ENCODE measurements at regions of chr22 and their contacts with region 1.

Region 1: DNA sequence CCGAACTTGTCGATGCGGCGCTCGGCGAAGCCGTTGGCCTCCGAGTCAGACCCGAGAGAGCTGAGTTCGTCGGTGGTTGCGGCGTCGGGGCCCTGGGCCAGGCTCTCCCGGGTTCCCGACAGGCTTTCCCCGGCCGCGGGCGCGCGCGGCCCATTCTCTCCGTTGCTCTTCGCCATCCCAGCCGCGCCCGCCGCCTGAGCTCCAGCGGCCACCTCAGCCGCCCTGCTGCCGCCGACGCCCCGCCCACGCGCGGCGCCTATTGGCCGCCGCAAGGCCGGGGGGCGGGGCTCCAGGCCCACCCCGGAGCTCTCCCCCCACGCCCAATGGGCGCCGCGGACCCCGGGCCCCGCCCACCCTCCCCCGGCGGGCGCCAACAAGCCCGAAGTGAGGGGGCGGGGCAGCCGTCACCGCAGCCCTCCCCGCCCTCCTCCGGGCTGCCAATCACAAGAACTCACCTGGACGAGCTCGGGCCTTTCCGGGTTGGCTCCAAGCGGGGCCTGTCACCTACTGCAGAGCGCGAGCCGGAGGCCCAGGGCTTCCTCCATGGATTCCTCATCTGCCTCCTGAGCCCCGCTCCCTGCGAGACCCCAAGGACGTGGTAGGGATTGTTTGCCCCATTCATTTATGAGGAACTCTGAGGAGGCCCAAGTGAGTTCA is at the start of gene TBC1D10A:
- H3K4me3 ChIP-seq: peak within 1 kb of the TSS; percentile 85
- H3K27ac ChIP-seq: peak within 1 kb of the TSS; percentile 72
- H3K4me1 ChIP-seq: peaks cover 11% of the 10 kb centered on the region
- CTCF ChIP-seq: no peak

Region 2: DNA sequence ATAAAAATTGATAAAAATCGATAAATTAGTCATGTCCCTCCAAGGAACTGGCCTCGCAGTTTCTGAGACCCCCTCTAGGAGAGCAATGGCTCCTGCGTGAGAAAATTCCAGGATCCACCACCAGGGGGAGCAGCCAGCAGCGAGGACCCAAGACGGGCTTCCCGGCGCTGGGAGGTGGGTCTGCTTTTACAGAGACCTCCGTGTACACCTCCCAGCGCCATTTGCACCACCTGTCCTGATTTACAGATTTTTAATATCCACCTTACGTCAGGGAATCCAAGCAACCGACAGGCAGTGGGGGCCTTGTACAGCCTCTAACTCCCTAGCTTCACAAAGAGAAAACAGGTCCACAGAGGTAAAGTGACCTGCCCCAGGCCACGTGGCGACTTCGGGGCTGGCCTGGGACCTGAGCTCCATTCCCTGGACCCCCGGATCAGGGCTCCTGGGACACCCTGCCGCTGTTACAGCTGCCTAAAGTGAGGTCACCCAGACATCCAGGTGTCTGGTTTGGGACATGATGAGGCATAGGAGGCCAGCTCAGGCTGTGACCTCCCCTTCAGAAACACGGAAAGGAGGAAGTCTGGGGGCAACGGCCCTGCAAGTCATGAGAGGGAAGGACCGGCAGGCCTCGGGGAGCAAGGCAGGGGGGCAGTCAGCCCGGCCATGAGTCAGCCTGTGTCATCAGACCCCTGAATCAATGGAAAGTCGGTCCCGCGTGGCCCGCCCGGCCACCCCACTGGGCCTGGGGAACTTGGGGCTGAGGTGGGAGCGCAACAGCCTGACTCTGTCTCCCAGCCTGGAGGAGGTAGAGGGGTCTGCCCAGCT is 63.7 kb before region 1 on chr22:
- CTCF ChIA-PET with region 1: interaction called, 18 read pairs
- POLR2A ChIA-PET with region 1: no interaction called
- H3K4me3 ChIP-seq: no peak overlapping the region
- H3K27ac ChIP-seq: no peak overlapping the region
- H3K4me1 ChIP-seq: no peaks in the 10 kb centered on the region
- CTCF ChIP-seq: peak; percentile 67

Region 3: DNA sequence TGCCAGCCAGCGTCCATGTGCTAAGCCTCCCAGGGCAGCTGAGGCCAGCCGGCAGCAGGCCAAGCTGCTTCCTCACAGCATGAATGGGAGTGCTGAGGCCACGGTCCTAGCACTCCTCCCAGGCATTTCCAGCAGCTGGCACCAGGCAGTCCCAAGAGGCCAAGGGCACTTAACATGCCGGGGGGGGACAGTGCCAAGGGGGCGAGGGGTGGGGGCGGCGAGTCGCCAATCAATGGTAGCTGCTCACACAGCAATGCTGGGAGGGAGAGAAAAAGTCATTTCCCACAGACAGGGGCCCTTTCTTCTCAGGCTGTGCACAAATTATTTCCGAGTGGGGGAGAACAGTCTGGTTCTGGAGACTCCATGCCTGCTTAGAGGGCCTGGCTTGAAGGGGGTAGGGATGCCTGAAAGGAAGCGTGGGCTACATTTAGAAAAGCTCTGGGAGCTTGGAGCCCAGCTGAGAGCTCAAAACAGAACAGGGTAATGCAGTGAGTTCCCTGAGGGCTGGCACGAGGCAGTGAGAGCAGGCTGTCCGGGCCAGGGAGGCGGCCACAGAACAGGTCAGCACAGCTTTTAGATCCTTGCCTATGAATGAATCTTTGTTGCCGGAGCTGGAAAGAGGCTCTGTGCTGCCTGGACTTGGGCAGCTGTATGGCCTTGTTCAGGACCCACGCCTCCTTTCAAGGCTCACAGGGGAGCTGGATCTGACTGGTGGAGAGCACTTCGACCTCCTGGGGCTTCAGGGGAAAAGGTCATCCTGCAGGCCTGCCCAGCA is 14.3 kb after region 1 on chr22:
- CTCF ChIA-PET with region 1: interaction called, 7 read pairs
- POLR2A ChIA-PET with region 1: interaction called, 15 read pairs
- H3K4me3 ChIP-seq: no peak overlapping the region
- H3K27ac ChIP-seq: no peak overlapping the region
- H3K4me1 ChIP-seq: no peaks in the 10 kb centered on the region
- CTCF ChIP-seq: no peak